ENCODE measurements at regions of chr3 and their contacts with region 1.

Region 1: GRCh38 chr3:187227658-187228258 is 30.5 kb downstream of the RTP1 start:
- DNase-seq: no peak
- H3K4me3 ChIP-seq: no peak overlapping the region
- H3K27ac ChIP-seq: no peak overlapping the region
- H3K4me1 ChIP-seq: no peaks in the 10 kb centered on the region
- H3K27me3 ChIP-seq: peaks cover 7% of the 10 kb centered on the region
- CTCF ChIP-seq: no peak

Region 2: DNA sequence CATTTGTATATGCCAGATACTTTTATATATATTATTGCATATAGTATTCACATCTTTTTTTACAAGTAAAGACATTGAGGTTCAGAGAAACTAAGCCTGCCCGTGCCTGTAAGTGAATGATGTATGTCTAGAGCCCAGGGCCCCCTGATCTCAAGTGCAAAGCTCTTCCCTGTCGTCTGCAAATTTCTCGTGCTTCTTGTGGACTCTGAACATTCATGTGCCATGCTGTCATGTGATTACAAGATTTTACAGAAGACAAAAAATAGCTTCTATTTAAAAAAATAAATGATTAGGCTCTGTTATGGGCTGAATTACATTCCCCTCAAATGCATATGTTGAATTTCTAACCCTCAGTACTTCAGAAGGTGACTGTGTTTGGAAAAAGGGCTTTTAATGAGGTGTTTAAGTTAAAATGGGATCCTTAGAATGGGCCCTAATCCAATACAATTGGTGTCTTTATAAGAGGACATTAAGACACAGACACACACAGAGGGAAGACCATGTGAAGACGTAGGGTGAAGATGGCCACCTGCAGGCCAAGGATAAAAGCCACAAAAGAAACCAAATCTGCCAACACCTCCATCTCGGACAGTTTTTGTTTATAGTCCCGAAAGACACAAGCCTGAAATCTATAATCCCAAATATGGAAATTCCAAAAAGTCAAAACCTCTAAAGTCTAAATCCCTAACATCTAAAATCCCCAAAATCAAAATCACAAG is 67.7 kb after region 1 on chr3:
- CTCF ChIA-PET with region 1: no interaction called
- POLR2A ChIA-PET with region 1: no interaction called
- intact Hi-C with region 1: loop called (anchors 5 kb)
- DNase-seq: no peak
- H3K4me3 ChIP-seq: no peak overlapping the region
- H3K27ac ChIP-seq: no peak overlapping the region
- H3K4me1 ChIP-seq: peaks cover 8% of the 10 kb centered on the region
- H3K27me3 ChIP-seq: no peaks in the 10 kb centered on the region
- CTCF ChIP-seq: peak; percentile 34; the same call in 1 of the 2 replicates

Region 3: GRCh38 chr3:187679638-187680396 is 452.1 kb after region 1 on chr3:
- CTCF ChIA-PET with region 1: interaction called, 10 read pairs
- POLR2A ChIA-PET with region 1: interaction called, 12 read pairs
- intact Hi-C with region 1: no loop called
- DNase-seq: peak; percentile 78
- H3K4me3 ChIP-seq: no peak overlapping the region
- H3K27ac ChIP-seq: no peak overlapping the region
- H3K4me1 ChIP-seq: peaks cover 7% of the 10 kb centered on the region
- H3K27me3 ChIP-seq: no peaks in the 10 kb centered on the region
- CTCF ChIP-seq: peak; percentile 95